ENCODE measurements at regions of chr1 and their contacts with region 1.

Region 1: DNA sequence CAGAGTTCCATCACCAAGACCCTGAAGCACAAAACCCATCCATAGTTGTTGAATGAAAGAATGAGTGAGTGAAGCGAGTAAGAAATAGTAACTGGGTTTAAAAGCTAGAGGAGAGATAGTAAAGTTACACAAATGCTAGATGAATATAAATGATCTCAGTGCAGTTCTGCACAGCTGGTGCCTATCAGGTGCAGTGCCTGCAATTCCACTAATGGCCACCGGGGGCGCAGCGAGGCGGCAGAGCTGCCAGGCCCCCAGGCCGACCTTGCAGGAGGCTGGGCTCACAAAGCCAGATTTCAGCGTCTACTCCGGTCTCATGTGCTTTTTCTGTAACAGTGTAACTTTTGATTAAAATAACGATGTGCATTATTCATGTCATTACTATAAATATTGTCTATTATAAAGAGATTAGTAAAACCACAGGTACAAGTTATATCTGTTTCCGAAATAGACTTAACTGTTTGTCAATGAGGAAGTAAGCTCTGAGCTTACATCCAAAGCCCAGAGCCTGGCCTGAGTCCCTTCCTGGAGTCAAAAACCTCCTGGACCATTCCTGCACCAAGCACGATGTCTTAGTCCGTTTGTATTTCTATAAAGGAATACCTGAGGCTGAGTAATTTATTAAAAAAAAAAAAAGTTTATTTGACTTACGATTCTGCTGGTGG is 477.6 kb downstream of the NPHP4 start:
- DNase-seq: no peak
- H3K4me3 ChIP-seq: no peak overlapping the region
- H3K27ac ChIP-seq: no peak overlapping the region
- H3K4me1 ChIP-seq: peaks cover 0 to 13% (median 3%) of the 10 kb centered on the region in 4 donors
- H3K27me3 ChIP-seq: peaks cover 0 to 51% (median 2%) of the 10 kb centered on the region in 4 donors
- CTCF ChIP-seq: peak in 2 of 3 experiments; percentile 96 to 99
- EP300 ChIP-seq: no peak
- POLR2A ChIP-seq: no peak

Region 2: DNA sequence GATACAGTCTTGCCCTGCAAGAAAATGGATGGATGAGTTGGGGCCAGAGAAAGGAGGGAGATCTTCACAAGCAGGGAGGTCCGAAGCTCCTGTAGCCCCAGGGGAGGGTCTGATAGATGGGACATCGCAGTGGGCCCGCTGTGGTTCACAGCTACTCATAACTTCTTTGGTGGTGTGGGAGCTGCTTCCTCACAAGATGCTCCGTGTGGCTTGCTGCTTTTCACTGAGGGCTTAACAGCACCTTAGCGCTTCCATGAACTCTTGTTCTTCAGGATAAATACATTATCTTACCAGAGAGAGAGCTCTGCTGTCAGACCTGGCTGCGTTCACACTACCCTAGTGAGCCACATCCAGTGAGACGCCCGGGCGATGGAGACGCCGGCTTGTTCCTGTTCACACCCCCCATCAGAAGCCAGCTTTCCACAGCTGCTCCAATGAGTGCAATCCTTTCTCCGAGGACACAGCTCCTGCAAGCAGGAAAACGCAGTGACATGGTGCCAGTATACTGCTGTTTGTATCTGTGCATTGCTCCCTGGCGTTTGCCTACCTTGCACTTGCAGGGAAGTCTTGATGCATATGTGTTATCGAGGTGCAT is 260.4 kb before region 1 on chr1:
- intact Hi-C with region 1: no loop called
- DNase-seq: no peak
- H3K4me3 ChIP-seq: no peak overlapping the region
- H3K27ac ChIP-seq: no peak overlapping the region
- H3K4me1 ChIP-seq: no peaks in the 10 kb centered on the region
- H3K27me3 ChIP-seq: peaks cover 0 to 22% (median 0%) of the 10 kb centered on the region in 4 donors
- CTCF ChIP-seq: no peak
- EP300 ChIP-seq: no peak
- POLR2A ChIP-seq: no peak

Region 3: DNA sequence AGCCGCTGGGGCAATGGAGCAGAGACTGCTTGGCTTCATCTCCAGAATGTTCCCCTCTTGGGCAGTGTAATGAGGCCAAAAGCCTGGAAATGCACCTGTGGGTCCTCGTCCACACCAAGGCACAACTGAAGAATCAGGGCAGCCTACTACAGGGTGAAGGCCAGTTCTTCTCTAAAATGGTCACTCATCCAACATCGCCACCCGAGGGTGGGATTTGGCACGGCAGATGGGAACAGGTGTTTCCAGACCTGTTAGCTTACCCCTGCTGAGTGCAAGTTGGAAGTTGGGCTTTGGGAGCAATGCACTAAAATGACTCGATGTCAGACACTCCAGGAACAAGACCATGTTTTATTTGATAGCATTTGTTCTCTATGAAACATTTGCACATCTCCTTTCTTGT is 66.2 kb before region 1 on chr1:
- intact Hi-C with region 1: no loop called
- DNase-seq: no peak
- H3K4me3 ChIP-seq: no peak overlapping the region
- H3K27ac ChIP-seq: no peak overlapping the region
- H3K4me1 ChIP-seq: no peaks in the 10 kb centered on the region
- H3K27me3 ChIP-seq: peaks cover 0 to 79% (median 0%) of the 10 kb centered on the region in 4 donors
- CTCF ChIP-seq: no peak
- EP300 ChIP-seq: no peak
- POLR2A ChIP-seq: no peak

Region 4: GRCh38 chr1:5532811-5533210 is 18.2 kb after region 1 on chr1:
- intact Hi-C with region 1: no loop called
- DNase-seq: peak; percentile 62
- H3K4me3 ChIP-seq: no peak overlapping the region
- H3K27ac ChIP-seq: no peak overlapping the region
- H3K4me1 ChIP-seq: no peaks in the 10 kb centered on the region
- H3K27me3 ChIP-seq: peaks cover 0 to 40% (median 0%) of the 10 kb centered on the region in 4 donors
- CTCF ChIP-seq: no peak
- EP300 ChIP-seq: no peak
- POLR2A ChIP-seq: no peak

Region 5: GRCh38 chr1:5632224-5632623 is 117.6 kb after region 1 on chr1:
- intact Hi-C with region 1: no loop called
- DNase-seq: peak; percentile 60
- H3K4me3 ChIP-seq: no peak overlapping the region
- H3K27ac ChIP-seq: no peak overlapping the region
- H3K4me1 ChIP-seq: no peaks in the 10 kb centered on the region
- H3K27me3 ChIP-seq: peaks cover 0 to 19% (median 0%) of the 10 kb centered on the region in 4 donors
- CTCF ChIP-seq: no peak
- EP300 ChIP-seq: no peak
- POLR2A ChIP-seq: no peak

Region 6: DNA sequence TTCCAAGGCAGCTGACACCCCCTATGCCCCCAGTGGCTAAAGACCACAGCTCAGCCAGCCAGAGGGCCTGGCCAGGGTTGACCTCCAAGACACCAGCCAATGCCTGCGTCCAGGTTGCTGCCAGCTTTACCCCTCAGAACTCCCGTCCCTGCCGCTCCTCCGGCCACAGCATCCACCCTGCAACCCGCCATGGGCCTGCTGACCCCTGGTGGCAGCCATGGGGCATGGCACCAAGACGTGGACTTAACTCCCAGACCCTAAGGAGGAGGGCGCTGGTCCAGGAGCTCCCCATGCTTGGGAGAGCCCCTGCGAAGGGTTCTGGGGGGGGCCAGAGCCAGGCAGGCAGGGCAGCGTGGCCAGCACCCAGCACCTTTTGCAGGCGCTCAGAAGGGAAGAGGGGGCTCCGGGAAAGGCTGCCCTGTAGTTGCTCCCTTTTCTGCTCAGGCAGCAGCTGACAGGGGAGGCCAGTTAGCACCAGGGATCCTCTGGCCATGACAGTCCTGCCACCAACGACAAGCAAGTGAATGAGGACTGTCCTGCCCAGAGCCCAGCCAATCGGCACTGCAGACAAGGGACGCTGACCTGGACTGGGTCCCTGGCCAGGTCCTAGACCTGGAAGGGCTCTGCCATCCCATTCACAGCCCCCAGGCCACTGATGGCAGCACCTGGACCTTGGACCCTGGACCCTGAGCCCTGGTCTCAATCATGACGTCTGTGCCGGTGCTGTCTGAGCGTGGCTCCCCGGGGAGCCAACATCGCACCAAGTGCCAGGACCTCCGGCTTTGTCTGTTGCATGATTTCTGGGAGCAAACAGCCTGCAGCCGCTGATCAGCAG is 231.3 kb after region 1 on chr1:
- intact Hi-C with region 1: loop called (anchors 5 kb)
- DNase-seq: no peak
- H3K4me3 ChIP-seq: no peak overlapping the region
- H3K27ac ChIP-seq: no peak overlapping the region
- H3K4me1 ChIP-seq: peaks cover 0 to 16% (median 3%) of the 10 kb centered on the region in 4 donors
- H3K27me3 ChIP-seq: peaks cover 0 to 94% (median 4%) of the 10 kb centered on the region in 4 donors
- CTCF ChIP-seq: peak; percentile 83 to 94 (median 89)
- EP300 ChIP-seq: no peak
- POLR2A ChIP-seq: no peak

Region 7: DNA sequence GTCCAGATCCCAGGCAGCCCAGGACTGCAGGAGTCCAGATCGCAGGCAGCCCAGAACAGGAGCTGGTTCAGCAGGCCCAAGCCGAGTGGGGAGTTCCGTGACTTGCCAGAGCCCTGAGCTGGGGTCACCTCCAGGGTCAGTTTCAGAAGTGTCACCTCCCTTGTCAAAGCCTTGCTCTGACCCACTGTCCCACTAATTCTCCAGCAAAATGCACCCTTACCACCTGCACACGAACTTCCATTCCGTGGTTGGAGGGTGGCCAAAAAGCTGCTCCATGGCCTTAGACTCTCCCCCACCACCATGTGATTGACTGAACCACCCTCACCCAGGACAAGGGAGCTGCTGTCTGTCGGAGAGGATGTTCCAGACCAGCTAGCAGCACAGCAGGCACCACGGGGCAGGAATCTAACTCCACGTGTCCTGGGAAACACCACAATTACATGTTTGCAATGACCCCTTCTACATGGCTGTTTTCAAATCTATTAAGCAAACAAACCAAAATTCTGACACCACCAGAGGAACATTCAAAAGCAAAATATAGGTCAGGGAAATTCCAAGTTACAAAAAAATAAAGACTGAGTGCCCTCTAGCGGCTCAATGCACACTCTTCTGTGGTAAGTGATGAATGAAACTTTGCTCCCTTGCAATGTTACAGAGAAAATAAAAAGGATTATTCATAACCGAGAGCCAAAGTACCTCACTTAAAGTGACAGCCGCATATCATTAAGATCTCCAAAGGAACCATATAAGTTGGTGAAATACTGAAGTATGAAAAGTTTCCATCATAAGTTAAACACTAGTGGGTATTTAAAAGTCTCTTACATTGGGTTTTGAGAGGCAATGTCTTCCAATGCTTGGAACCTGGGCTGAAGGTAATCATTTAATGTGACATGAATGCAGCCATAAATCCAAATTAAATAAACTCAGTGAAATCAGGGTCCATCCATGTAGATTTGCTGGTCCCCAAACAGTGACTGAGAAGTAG is 401.2 kb after region 1 on chr1:
- intact Hi-C with region 1: loop called (anchors 5 kb)
- DNase-seq: no peak
- H3K4me3 ChIP-seq: no peak overlapping the region
- H3K27ac ChIP-seq: no peak overlapping the region
- H3K4me1 ChIP-seq: peaks cover 0 to 8% (median 6%) of the 10 kb centered on the region in 4 donors
- H3K27me3 ChIP-seq: no peaks in the 10 kb centered on the region
- CTCF ChIP-seq: peak; percentile 43 to 70 (median 45)
- EP300 ChIP-seq: no peak
- POLR2A ChIP-seq: no peak